H1 (cell line): ENCODE measurements at regions of chr2 and their contacts with region 1.

Region 1: DNA sequence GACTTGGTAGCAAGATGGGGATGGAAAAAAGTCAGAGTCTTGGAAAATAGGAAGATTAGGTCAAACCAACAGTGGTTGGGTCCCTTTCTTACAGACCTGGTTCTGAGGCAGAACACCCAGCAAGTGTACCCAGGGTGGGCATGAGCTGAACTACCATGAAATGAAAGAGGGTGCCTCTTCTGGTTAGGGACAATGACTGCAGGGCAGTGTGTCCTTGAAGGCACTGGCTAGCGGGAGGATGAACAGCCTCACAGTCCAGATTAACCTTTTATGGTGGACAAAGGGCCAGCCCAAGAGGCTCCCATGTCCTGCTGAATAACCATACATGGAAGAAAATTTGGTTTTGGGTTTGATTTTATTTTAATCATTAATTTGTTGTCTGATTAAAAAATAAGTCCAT is 61.8 kb upstream of the CCDC85A start:
- DNase-seq: no peak
- H3K4me3 ChIP-seq: no peak overlapping the region
- H3K27ac ChIP-seq: no peak overlapping the region
- H3K4me1 ChIP-seq: peaks cover 4 to 26% (median 23%) of the 10 kb centered on the region in 4 experiments; a peak in 6 of 7 replicates
- H3K27me3 ChIP-seq: peaks cover 0 to 1% (median 0%) of the 10 kb centered on the region in 4 experiments; a peak in 1 of 7 replicates
- CTCF ChIP-seq: peak in 2 of 3 experiments; percentile 16 to 23; a peak in 2 of 4 replicates
- EP300 ChIP-seq: no peak
- POLR2A ChIP-seq: no peak
- RAD21 ChIP-seq: 0 out of 4 replicates have a peak, but pooled peaks of 1 of the 2 experiments have one; percentile 4

Region 2: GRCh38 chr2:56108806-56109205 is 13.2 kb before region 1 on chr2:
- CTCF ChIA-PET with region 1: interaction called, 10 read pairs
- POLR2A ChIA-PET with region 1: interaction called, 4 read pairs
- DNase-seq: no peak
- H3K4me3 ChIP-seq: no peak overlapping the region
- H3K27ac ChIP-seq: no peak overlapping the region
- H3K4me1 ChIP-seq: peaks cover 0 to 5% (median 2%) of the 10 kb centered on the region in 4 experiments; a peak in 2 of 7 replicates
- H3K27me3 ChIP-seq: no peaks in the 10 kb centered on the region
- CTCF ChIP-seq: peak; percentile 13 to 43 (median 41); a peak in 3 of 4 replicates
- EP300 ChIP-seq: no peak
- POLR2A ChIP-seq: no peak
- RAD21 ChIP-seq: 0 out of 4 replicates have a peak, but pooled peaks of 1 of the 2 experiments have one; percentile 11